Upper lobe of right lung (tissue), 1 donor: ENCODE measurements at regions of chr3 and their contacts with region 1.

Region 1: GRCh38 chr3:179558742-179559364 is 3.9 kb upstream of the ACTL6A start:
- DNase-seq: no peak
- ATAC-seq: no peak
- H3K4me3 ChIP-seq: no peak overlapping the region
- H3K27ac ChIP-seq: no peak overlapping the region
- H3K4me1 ChIP-seq: peaks cover 3% of the 10 kb centered on the region
- H3K27me3 ChIP-seq: no peaks in the 10 kb centered on the region
- CTCF ChIP-seq: peak; percentile 88

Region 2: DNA sequence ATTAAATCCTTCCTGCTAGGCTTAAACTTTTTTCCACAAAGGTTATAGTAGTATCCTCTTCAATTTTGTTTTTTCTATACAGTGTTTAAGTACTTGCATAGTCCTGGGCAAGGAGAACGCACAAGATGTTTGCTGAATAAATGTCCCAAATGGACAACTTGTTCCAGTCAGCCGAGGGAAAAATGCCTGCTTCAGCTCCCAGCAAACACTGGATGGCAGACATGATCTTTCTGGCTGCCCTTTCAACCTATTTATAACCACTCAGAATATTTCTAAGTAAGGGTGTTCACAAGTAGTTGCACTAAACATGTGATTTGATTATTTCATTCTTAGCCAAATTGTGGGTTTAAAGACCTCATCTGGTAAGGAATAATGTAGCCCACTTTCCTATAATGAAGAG is 137.4 kb before region 1 on chr3:
- intact Hi-C with region 1: loop called (anchors 5 kb)
- DNase-seq: no peak
- ATAC-seq: peak; percentile 82
- H3K4me3 ChIP-seq: no peak overlapping the region
- H3K27ac ChIP-seq: no peak overlapping the region
- H3K4me1 ChIP-seq: no peaks in the 10 kb centered on the region
- H3K27me3 ChIP-seq: no peaks in the 10 kb centered on the region
- CTCF ChIP-seq: peak; percentile 58

Region 3: DNA sequence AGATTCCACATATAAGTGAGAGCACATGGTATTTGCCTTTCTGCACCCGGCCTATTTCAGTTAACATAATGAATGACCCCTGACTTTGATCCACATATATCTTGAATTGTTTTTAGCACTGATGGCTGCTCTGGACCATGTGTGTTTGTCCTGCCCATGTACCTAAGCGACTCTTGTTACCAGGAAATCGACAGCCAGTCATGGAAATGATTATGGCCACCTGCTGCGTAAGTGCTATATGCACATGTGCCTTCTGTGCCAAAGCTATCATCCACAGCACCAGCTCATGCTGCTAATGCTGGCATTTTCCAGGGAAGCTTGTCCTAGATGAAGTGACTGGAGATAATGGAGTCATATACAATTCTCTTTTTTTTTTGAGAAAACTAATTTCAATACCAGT is 374.2 kb after region 1 on chr3:
- intact Hi-C with region 1: no loop called
- DNase-seq: no peak
- ATAC-seq: no peak
- H3K4me3 ChIP-seq: no peak overlapping the region
- H3K27ac ChIP-seq: no peak overlapping the region
- H3K4me1 ChIP-seq: no peaks in the 10 kb centered on the region
- H3K27me3 ChIP-seq: no peaks in the 10 kb centered on the region
- CTCF ChIP-seq: no peak